Mammary epithelial cell (primary cell): ENCODE measurements at regions of chr12 and their contacts with region 1.

Region 1: DNA sequence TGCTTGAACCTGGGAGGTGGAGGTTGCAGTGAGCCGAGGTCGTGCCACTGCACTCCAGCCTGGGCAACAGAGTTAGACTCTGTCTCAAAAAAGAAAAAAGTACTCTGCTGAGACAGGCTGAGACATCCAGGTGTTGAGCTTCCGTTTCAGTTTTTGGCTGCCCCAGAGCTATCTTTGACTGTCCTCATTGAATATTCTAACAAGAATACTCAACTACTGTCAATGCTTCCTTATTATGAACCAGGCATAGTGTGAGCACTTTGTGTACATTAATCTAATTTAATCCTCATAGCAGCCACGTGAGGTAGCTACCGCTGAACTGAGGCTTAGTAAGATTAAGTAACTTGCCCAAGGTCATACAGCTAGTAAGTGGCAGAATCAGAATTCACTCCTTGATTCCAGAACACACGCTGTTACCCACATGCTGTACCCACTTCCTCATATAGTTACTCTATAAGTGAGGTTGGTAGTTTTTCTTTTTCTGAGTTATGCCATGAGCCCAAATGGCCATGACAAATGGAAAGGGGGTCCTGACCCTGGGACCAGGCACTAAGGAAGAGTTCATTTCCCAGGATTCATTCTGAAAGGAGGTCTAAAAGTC is 11.3 kb downstream of the ALDH1L2 start:
- DNase-seq: no peak
- H3K4me3 ChIP-seq: no peak overlapping the region
- H3K27ac ChIP-seq: no peak overlapping the region
- H3K4me1 ChIP-seq: peaks cover 27% of the 10 kb centered on the region
- H3K27me3 ChIP-seq: no peaks in the 10 kb centered on the region
- CTCF ChIP-seq: no peak

Region 2: GRCh38 chr12:105001476-105001875 is 71.5 kb before region 1 on chr12:
- CTCF ChIA-PET with region 1: no interaction called
- dilution Hi-C with region 1: loop called (anchors 5 kb)
- in situ Hi-C with region 1: no loop called
- intact Hi-C with region 1: no loop called
- DNase-seq: no peak
- H3K4me3 ChIP-seq: no peak overlapping the region
- H3K27ac ChIP-seq: no peak overlapping the region
- H3K4me1 ChIP-seq: no peaks in the 10 kb centered on the region
- H3K27me3 ChIP-seq: no peaks in the 10 kb centered on the region
- CTCF ChIP-seq: no peak

Region 3: GRCh38 chr12:105378911-105379310 is 305.9 kb after region 1 on chr12:
- CTCF ChIA-PET with region 1: no interaction called
- dilution Hi-C with region 1: no loop called
- in situ Hi-C with region 1: no loop called
- intact Hi-C with region 1: no loop called
- DNase-seq: no peak
- H3K4me3 ChIP-seq: no peak overlapping the region
- H3K27ac ChIP-seq: no peak overlapping the region
- H3K4me1 ChIP-seq: peaks cover 6% of the 10 kb centered on the region
- H3K27me3 ChIP-seq: no peaks in the 10 kb centered on the region
- CTCF ChIP-seq: peak in 1 of 2 donors; percentile 34